ENCODE measurements at regions of chr12 and their contacts with region 1.

Region 1: GRCh38 chr12:30622509-30622908 is 73.2 kb downstream of the IPO8 start:
- DNase-seq: peak in 1 of 2 experiments; percentile 44
- H3K4me3 ChIP-seq: no peak overlapping the region
- H3K27ac ChIP-seq: no peak overlapping the region
- H3K4me1 ChIP-seq: no peaks in the 10 kb centered on the region
- H3K27me3 ChIP-seq: no peaks in the 10 kb centered on the region
- CTCF ChIP-seq: no peak

Region 2: GRCh38 chr12:30269496-30269895 is 353.0 kb before region 1 on chr12:
- CTCF ChIA-PET with region 1: no interaction called
- POLR2A ChIA-PET with region 1: interaction called, 10 read pairs
- intact Hi-C with region 1: no loop called
- DNase-seq: no peak
- H3K4me3 ChIP-seq: no peak overlapping the region
- H3K27ac ChIP-seq: no peak overlapping the region
- H3K4me1 ChIP-seq: no peaks in the 10 kb centered on the region
- H3K27me3 ChIP-seq: no peaks in the 10 kb centered on the region
- CTCF ChIP-seq: no peak

Region 3: GRCh38 chr12:31317471-31318395 is 695.2 kb after region 1 on chr12:
- CTCF ChIA-PET with region 1: no interaction called
- POLR2A ChIA-PET with region 1: no interaction called
- intact Hi-C with region 1: no loop called
- DNase-seq: no peak
- H3K4me3 ChIP-seq: peak overlapping the region; percentile 20; the same call in 1 of the 2 replicates
- H3K27ac ChIP-seq: peak overlapping the region; percentile 38
- H3K4me1 ChIP-seq: peaks cover 76% of the 10 kb centered on the region
- H3K27me3 ChIP-seq: no peaks in the 10 kb centered on the region
- CTCF ChIP-seq: no peak

Measured in PC-9 (cell line).